AG04450 (cell line): ENCODE measurements at regions of chr11 and their contacts with region 1.

Region 1: GRCh38 chr11:96389720-96390487 is at the starts of genes CCDC82 and JRKL:
- DNase-seq: peak; percentile 87
- H3K4me3 ChIP-seq: peak within 1 kb of the TSS; percentile 91
- H3K27ac ChIP-seq: peak within 1 kb of the TSS; percentile 91
- H3K27me3 ChIP-seq: no peaks in the 10 kb centered on the region
- CTCF ChIP-seq: no peak
- polyA plus RNA-seq, gene CCDC82: 11.9 and 20.4 TPM in 2 replicates
- polyA plus RNA-seq, gene JRKL: 8.1 and 11.2 TPM in 2 replicates

Region 2: DNA sequence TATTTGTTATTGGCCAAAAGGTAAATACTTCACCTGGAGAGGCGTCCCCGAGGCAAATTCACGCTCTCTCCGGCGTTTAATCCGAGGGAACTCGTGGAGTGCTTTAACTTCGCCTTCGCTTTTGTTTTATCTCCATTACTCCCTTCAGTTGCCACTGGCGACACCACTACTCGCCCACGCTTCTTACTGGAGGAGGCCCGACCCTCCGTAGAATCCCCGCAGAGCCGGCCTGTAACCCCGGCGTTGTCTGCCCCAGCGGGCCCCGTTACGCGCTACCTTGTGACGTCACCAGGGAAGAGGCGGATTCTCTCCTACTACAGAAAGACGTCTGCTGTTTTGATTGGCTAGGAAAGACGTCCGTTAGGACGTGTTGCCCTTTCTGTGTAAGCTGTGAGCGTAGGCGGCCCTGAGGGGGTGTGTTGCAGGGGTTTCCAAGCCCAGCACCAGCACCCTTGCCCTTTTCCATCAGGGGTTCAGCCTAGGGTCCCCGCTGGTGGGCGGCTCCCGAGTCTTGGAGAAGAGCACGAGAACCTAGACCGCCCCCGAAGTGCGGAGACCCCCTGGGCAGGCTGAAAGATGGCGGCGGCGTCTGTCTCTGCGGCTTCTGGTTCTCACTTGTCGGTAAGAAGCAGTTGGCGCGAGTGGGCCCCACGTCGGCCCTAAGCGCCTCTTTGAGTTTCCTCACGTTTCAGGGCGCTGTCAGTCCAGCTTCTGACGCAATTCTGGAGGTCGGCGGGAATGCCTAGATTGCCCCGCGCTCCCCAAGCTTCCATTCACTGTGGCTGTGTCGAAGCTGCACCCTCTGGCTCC is 599.6 kb before region 1 on chr11 and contains the start of gene CEP57:
- CTCF ChIA-PET with region 1: interaction called, 14 read pairs
- POLR2A ChIA-PET with region 1: interaction called, 12 read pairs
- DNase-seq: peak; percentile 97
- H3K4me3 ChIP-seq: peak within 1 kb of the TSS; percentile 86
- H3K27ac ChIP-seq: peak within 1 kb of the TSS; percentile 98
- H3K27me3 ChIP-seq: no peaks in the 10 kb centered on the region
- CTCF ChIP-seq: no peak
- polyA plus RNA-seq, gene CEP57: 27.6 and 49.2 TPM in 2 replicates

Region 3: GRCh38 chr11:95849087-95849825 is 540.6 kb before region 1 on chr11:
- CTCF ChIA-PET with region 1: interaction called, 15 read pairs
- POLR2A ChIA-PET with region 1: interaction called, 3 read pairs
- DNase-seq: no peak
- H3K4me3 ChIP-seq: no peak overlapping the region
- H3K27ac ChIP-seq: no peak overlapping the region
- H3K27me3 ChIP-seq: no peaks in the 10 kb centered on the region
- CTCF ChIP-seq: peak; percentile 39

Region 4: DNA sequence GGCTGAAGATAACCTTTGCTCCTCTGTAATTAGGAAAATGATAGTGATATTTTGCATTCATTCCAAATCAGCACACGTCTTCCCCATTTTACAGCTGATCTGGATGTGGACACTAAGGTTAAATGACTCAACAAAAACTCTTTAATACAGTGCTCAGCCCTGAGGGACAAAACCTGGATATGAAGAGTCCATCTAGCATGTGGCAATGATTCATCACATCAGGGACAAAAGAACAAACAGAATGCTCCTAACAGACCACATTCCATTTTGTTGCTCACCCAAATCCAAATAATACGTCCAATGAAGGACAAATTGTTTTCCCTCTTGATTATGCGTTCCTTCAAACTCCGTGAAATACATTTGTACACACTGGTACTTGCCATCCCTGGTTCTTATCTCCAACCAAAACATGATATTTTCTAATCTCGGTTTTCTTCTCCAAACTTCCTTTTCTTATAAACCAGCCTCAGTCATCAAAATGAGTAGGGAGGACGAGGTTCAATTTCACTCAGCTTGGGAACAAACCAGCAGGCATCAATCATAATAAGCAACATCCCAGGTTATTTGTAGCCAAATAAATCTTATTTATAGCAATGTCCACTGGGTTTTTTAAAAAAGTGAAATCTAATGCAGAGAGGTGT is 412.2 kb before region 1 on chr11:
- CTCF ChIA-PET with region 1: interaction called, 10 read pairs
- POLR2A ChIA-PET with region 1: no interaction called
- DNase-seq: no peak
- H3K4me3 ChIP-seq: no peak overlapping the region
- H3K27ac ChIP-seq: no peak overlapping the region
- H3K27me3 ChIP-seq: no peaks in the 10 kb centered on the region
- CTCF ChIP-seq: no peak

Region 5: GRCh38 chr11:96324960-96325359 is 64.9 kb before region 1 on chr11:
- CTCF ChIA-PET with region 1: no interaction called
- POLR2A ChIA-PET with region 1: no interaction called
- DNase-seq: no peak
- H3K4me3 ChIP-seq: no peak overlapping the region
- H3K27ac ChIP-seq: peak overlapping the region; percentile 74
- H3K27me3 ChIP-seq: no peaks in the 10 kb centered on the region
- CTCF ChIP-seq: no peak